ENCODE measurements at regions of chr7 and their contacts with region 1.

Region 1: GRCh38 chr7:17144322-17144721 is 154.1 kb upstream of the AHR start:
- DNase-seq: peak; percentile 70
- H3K4me3 Mint-ChIP-seq: peak overlapping the region; percentile 16
- H3K27ac Mint-ChIP-seq: peak overlapping the region; percentile 71
- H3K4me1 Mint-ChIP-seq: peaks cover 63% of the 10 kb centered on the region
- H3K27me3 Mint-ChIP-seq: no peaks in the 10 kb centered on the region

Region 2: DNA sequence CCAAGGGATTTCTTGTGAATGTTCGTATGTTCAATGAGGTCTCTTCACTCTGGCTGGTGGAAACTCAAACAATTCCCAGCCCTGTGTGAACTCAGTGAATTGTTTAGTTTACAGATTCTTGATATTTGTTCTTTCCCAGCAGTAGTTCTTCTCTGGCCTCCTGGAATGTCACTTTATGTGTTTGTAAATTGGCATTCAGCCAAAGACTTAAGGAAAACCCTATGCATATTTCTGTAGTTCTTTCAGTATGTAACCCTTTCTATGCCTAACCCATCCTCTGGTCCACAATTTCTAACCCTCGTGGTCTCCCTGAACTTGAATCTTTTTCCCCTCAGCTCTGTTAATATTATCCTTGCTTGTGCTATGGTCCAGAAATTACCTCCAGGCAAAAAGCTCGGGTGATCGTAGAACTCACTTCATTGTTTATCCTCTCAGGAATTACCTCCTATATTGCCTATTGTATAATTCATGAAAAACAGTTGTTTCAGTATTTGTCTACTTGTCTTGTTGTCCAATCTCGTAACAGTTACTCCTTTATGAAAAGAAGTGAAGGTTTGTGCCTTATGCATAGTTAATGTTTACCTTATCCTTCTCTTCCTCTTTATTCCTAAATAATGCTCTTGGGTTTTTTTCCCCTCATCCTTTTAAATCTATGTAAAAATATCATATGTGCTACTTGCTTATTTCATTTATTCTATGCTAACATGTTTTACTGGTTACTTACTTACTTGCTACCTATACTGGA is 238.8 kb before region 1 on chr7:
- intact Hi-C with region 1: no loop called
- DNase-seq: no peak
- H3K4me3 Mint-ChIP-seq: no peak overlapping the region
- H3K27ac Mint-ChIP-seq: no peak overlapping the region
- H3K4me1 Mint-ChIP-seq: no peaks in the 10 kb centered on the region
- H3K27me3 Mint-ChIP-seq: peaks cover 43% of the 10 kb centered on the region

Region 3: GRCh38 chr7:17159500-17160037 is 15.2 kb after region 1 on chr7:
- intact Hi-C with region 1: loop called (anchors 2 kb)
- DNase-seq: no peak
- H3K4me3 Mint-ChIP-seq: no peak overlapping the region
- H3K27ac Mint-ChIP-seq: peak overlapping the region; percentile 36
- H3K4me1 Mint-ChIP-seq: peaks cover 50% of the 10 kb centered on the region
- H3K27me3 Mint-ChIP-seq: no peaks in the 10 kb centered on the region

Region 4: GRCh38 chr7:17176371-17177032 is 32.2 kb after region 1 on chr7:
- intact Hi-C with region 1: no loop called
- DNase-seq: no peak
- H3K4me3 Mint-ChIP-seq: no peak overlapping the region
- H3K27ac Mint-ChIP-seq: no peak overlapping the region
- H3K4me1 Mint-ChIP-seq: peaks cover 7% of the 10 kb centered on the region
- H3K27me3 Mint-ChIP-seq: peaks cover 4% of the 10 kb centered on the region

Region 5: GRCh38 chr7:17370092-17370491 is 225.8 kb after region 1 on chr7:
- intact Hi-C with region 1: no loop called
- DNase-seq: no peak
- H3K4me3 Mint-ChIP-seq: no peak overlapping the region
- H3K27ac Mint-ChIP-seq: no peak overlapping the region
- H3K4me1 Mint-ChIP-seq: peaks cover 17% of the 10 kb centered on the region
- H3K27me3 Mint-ChIP-seq: no peaks in the 10 kb centered on the region

Measured in activated T-helper 2 cell treated with anti-CD3 and anti-CD28 coated beads, Interferon-gamma antibody, Interleukin-2, Interleukin-4, amounts not matched to agents 10 μg/mL and 5 μg/mL and 100 μg/mL, durations not matched to agents 14 hours and 24 hours and 36 hours (primary cell).